CD4-positive, alpha-beta T cell (primary cell): ENCODE measurements at regions of chr1 and their contacts with region 1.

Region 1: DNA sequence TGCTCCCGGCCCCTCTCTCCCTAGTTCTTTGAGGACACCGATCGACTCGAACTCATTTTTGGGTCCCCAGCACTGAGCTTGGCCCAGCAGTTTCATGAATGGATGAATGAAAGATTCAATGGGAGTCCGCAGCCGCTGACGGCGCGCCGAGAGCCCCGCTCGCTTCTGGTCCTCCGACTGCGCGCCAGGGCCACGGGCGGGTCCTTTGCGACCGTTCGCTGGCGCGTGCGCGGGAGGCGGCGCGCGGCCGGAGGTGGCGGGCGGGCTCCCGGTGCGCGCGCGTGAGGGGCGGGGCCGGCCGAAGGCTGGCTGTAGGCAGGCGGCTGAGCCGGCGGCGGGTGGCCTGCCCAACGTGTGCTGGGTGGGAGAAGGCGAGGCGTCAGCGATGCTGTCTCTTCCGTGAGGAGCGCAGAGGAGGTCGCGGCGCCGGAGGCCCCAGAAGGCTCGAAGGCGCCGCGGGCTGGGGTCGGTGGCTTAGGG is at the start of gene MAST2:
- DNase-seq: peak; percentile 49 to 92 (median 80)
- ATAC-seq: peak; percentile 94
- H3K4me3 ChIP-seq: peak within 1 kb of the TSS; percentile 49
- H3K4me3 Mint-ChIP-seq: peak within 1 kb of the TSS; percentile 95
- H3K27ac ChIP-seq: no peak within 1 kb of the TSS
- H3K27ac Mint-ChIP-seq: peak within 1 kb of the TSS; percentile 57
- H3K4me1 ChIP-seq: peaks cover 14% of the 10 kb centered on the region
- H3K4me1 Mint-ChIP-seq: peaks cover 25% of the 10 kb centered on the region
- H3K27me3 ChIP-seq: no peaks in the 10 kb centered on the region
- H3K27me3 Mint-ChIP-seq: no peaks in the 10 kb centered on the region
- CTCF ChIP-seq: no peak
- total RNA-seq, gene MAST2: 5.7 to 6.5 TPM

Region 2: GRCh38 chr1:45205910-45206721 is 597.2 kb before region 1 on chr1 and contains the start of gene ZSWIM5:
- CTCF ChIA-PET with region 1: no interaction called
- POLR2A ChIA-PET with region 1: no interaction called
- intact Hi-C with region 1: loop called in 1 of 2 experiments (anchors 10 kb)
- DNase-seq: peak; percentile 23 to 88 (median 62)
- ATAC-seq: peak; percentile 85
- H3K4me3 ChIP-seq: peak within 1 kb of the TSS; percentile 74
- H3K4me3 Mint-ChIP-seq: peak within 1 kb of the TSS; percentile 99
- H3K27ac ChIP-seq: peak within 1 kb of the TSS in 1 of 2 donors; percentile 32
- H3K27ac Mint-ChIP-seq: peak within 1 kb of the TSS; percentile 80
- H3K4me1 ChIP-seq: peaks cover 20% of the 10 kb centered on the region
- H3K4me1 Mint-ChIP-seq: peaks cover 30% of the 10 kb centered on the region
- H3K27me3 ChIP-seq: peaks cover 0 to 3% of the 10 kb centered on the region in 2 experiments
- H3K27me3 Mint-ChIP-seq: peaks cover 16% of the 10 kb centered on the region
- CTCF ChIP-seq: no peak
- total RNA-seq, gene ZSWIM5: 0.91 to 1.1 TPM

Region 3: GRCh38 chr1:45686317-45687013 is 116.9 kb before region 1 on chr1 and contains the start of gene GPBP1L1:
- CTCF ChIA-PET with region 1: no interaction called
- POLR2A ChIA-PET with region 1: no interaction called
- intact Hi-C with region 1: loop called in 1 of 2 experiments (anchors 5 kb)
- DNase-seq: peak; percentile 96 to 99 (median 98)
- ATAC-seq: peak; percentile 68
- H3K4me3 ChIP-seq: peak within 1 kb of the TSS; percentile 95
- H3K4me3 Mint-ChIP-seq: peak within 1 kb of the TSS; percentile 99
- H3K27ac ChIP-seq: peak within 1 kb of the TSS; percentile 97
- H3K27ac Mint-ChIP-seq: peak within 1 kb of the TSS; percentile 100
- H3K4me1 ChIP-seq: peaks cover 44% of the 10 kb centered on the region
- H3K4me1 Mint-ChIP-seq: peaks cover 51% of the 10 kb centered on the region
- H3K27me3 ChIP-seq: no peaks in the 10 kb centered on the region
- H3K27me3 Mint-ChIP-seq: no peaks in the 10 kb centered on the region
- CTCF ChIP-seq: no peak
- total RNA-seq, gene GPBP1L1: 116 to 125 TPM

Region 4: GRCh38 chr1:45750298-45751038 is 52.9 kb before region 1 on chr1 and contains the start of gene IPP:
- CTCF ChIA-PET with region 1: no interaction called
- POLR2A ChIA-PET with region 1: no interaction called
- intact Hi-C with region 1: loop called in 1 of 2 experiments (anchors 2 kb)
- DNase-seq: peak; percentile 76 to 97 (median 87)
- ATAC-seq: peak; percentile 84
- H3K4me3 ChIP-seq: peak within 1 kb of the TSS; percentile 67
- H3K4me3 Mint-ChIP-seq: peak within 1 kb of the TSS; percentile 91
- H3K27ac ChIP-seq: peak within 1 kb of the TSS; percentile 92 to 94
- H3K27ac Mint-ChIP-seq: peak within 1 kb of the TSS; percentile 97
- H3K4me1 ChIP-seq: peaks cover 26% of the 10 kb centered on the region
- H3K4me1 Mint-ChIP-seq: peaks cover 43% of the 10 kb centered on the region
- H3K27me3 ChIP-seq: no peaks in the 10 kb centered on the region
- H3K27me3 Mint-ChIP-seq: no peaks in the 10 kb centered on the region
- CTCF ChIP-seq: peak; percentile 42
- total RNA-seq, gene IPP: 6.0 to 6.6 TPM